ENCODE measurements at regions of chr2 and their contacts with region 1.

Region 1: GRCh38 chr2:46296840-46297545 is at the start of gene EPAS1:
- DNase-seq: peak; percentile 97 to 99 (median 99)
- ATAC-seq: peak; percentile 87 to 92
- H3K4me3 ChIP-seq: peak within 1 kb of the TSS; percentile 93
- H3K27ac ChIP-seq: peak within 1 kb of the TSS; percentile 98
- H3K4me1 ChIP-seq: peaks cover 3% of the 10 kb centered on the region
- H3K27me3 ChIP-seq: no peaks in the 10 kb centered on the region
- total RNA-seq, gene EPAS1: 210 to 340 (median 268) TPM

Region 2: GRCh38 chr2:46062637-46063412 is 234.2 kb before region 1 on chr2:
- intact Hi-C with region 1: loop called in 2 of 4 experiments (anchors 5 to 10 kb)
- DNase-seq: peak; percentile 80 to 92 (median 86)
- ATAC-seq: peak; percentile 76 to 86
- H3K4me3 ChIP-seq: no peak overlapping the region
- H3K27ac ChIP-seq: no peak overlapping the region
- H3K4me1 ChIP-seq: peaks cover 5% of the 10 kb centered on the region
- H3K27me3 ChIP-seq: no peaks in the 10 kb centered on the region

Region 3: DNA sequence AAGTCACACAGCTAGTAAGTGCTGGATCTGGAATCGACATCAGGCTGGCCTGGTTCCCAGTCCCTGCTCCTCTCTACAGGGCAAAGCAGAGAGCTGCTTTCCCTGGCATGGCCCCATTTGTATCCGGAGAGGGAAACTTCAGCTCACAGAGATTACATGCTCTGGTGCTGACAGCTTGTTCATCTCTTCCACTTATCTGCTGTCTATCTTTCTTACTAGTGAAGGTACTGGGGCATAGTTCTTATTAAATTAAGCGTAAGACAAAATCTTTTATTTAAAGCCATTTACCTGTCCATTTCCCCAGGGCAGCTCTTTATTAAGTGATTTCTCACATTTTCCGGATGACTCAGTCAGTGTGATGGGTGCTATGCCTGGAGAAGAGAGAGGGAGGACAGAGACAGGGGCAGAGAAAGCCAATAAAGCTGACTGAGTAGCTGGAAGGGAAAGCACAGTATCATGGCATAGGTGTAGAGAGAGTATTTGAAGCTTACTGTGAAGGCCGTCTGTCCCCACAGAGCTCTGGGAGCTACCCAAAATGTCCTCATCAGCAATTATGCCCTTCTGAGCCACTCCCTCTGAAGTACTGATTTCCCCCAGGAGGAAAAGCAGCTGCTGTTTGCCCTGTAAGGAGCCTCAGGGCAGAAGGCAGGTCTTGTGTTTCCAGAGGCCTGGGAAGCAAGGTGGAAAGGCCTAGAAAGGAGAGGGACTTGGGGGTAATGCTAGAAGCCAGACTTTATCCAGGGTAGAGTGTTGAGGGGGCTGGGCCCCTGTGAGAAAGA is 43.9 kb before region 1 on chr2:
- intact Hi-C with region 1: no loop called
- DNase-seq: peak; percentile 77 to 91 (median 88)
- ATAC-seq: peak; percentile 69 to 89
- H3K4me3 ChIP-seq: no peak overlapping the region
- H3K27ac ChIP-seq: peak overlapping the region; percentile 73
- H3K4me1 ChIP-seq: peaks cover 20% of the 10 kb centered on the region
- H3K27me3 ChIP-seq: no peaks in the 10 kb centered on the region

Region 4: GRCh38 chr2:46335391-46336282 is 38.6 kb after region 1 on chr2:
- intact Hi-C with region 1: loop called in 1 of 4 experiments (anchors 5 kb)
- DNase-seq: peak; percentile 44 to 79 (median 73)
- ATAC-seq: peak; percentile 36 to 42
- H3K4me3 ChIP-seq: peak overlapping the region; percentile 1
- H3K27ac ChIP-seq: peak overlapping the region; percentile 82
- H3K4me1 ChIP-seq: peaks cover 62% of the 10 kb centered on the region
- H3K27me3 ChIP-seq: no peaks in the 10 kb centered on the region

Region 5: DNA sequence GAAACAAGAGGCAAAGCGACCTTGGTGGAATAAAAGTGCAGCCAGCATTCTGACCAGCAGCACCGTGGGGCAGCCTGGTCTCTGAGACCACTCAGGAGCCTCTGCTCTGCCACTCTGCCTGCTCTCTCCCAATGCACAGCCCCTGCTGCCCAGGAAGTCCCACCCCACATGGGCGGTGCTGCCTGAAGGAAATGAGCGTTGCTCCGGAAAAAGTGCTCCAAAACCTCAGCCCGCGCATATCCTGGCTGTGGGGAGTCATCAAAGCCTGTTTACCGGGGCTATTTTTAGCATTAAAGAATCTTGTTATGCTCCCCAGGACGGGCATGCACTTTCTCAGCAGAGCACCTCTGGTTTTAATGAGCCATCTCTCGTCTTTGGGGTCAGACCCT is 54.8 kb after region 1 on chr2:
- intact Hi-C with region 1: loop called in 1 of 4 experiments (anchors 10 kb)
- DNase-seq: peak; percentile 69 to 87 (median 72)
- ATAC-seq: peak; percentile 40 to 80
- H3K4me3 ChIP-seq: no peak overlapping the region
- H3K27ac ChIP-seq: peak overlapping the region; percentile 75
- H3K4me1 ChIP-seq: peaks cover 28% of the 10 kb centered on the region
- H3K27me3 ChIP-seq: no peaks in the 10 kb centered on the region

Region 6: DNA sequence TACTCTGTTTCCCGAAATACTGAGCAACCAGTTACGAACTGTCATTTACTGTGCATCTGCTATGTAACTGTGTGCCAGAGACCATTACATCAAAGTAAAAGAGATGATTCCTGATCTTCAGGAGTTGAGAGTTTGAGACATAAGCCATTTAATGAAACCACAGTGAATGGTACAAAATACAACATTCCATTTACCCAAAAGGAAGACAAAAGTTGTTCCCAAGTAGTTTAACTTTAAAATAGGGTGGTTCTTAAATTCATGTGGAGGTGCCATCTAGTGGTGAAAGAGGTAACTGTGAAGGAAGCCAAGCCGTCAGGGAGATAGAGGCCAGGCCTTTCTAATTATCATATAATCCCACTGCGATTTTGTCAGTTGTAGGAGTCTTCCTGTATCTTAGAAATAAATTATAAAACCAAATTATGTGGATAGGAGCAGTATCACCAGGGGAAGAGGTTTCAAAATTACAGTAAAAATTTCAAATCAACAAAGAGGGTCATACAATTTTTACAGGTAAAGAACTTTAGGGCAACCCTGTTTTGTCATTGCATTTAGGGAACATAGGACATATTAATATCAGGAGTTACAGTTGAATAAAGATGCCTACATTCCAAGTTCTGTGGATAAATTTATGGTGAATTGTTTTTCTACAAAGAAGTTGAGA is 67.9 kb after region 1 on chr2:
- intact Hi-C with region 1: loop called in 3 of 4 experiments (anchors 2 to 10 kb)
- DNase-seq: no peak
- ATAC-seq: peak in 1 of 2 donors; percentile 44
- H3K4me3 ChIP-seq: no peak overlapping the region
- H3K27ac ChIP-seq: no peak overlapping the region
- H3K4me1 ChIP-seq: peaks cover 2% of the 10 kb centered on the region
- H3K27me3 ChIP-seq: no peaks in the 10 kb centered on the region

Measured in right cardiac atrium (tissue), 5 donors.